PC-3 (cell line): ENCODE measurements at regions of chr2 and their contacts with region 1.

Region 1: DNA sequence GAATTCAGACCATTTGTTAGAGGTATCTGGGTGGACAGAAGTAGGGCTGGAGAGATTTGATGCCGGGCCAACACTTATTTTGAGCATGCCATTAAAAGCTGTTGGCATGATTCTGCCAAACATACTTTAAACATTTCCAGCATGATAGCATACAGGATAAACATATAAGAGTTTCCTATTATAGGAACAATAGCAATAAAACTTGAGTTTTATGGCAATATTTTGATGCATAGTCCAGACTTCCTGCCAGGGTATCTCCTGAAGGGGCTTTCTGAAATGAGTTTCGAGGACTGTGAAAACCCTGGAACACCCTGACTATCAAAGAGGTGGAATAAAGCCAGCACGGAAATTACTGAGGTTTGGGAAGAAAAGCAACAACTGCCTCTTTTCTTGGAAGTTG is 1398.0 kb upstream of the NXPH2 start:
- DNase-seq: peak; percentile 88
- ATAC-seq: peak; percentile 87
- H3K4me3 ChIP-seq: peak overlapping the region; percentile 16; the same call in 1 of the 2 replicates
- H3K27ac ChIP-seq: peak overlapping the region; percentile 27; the same call in 1 of the 2 replicates
- H3K4me1 ChIP-seq: peaks cover 17% of the 10 kb centered on the region
- H3K27me3 ChIP-seq: no peaks in the 10 kb centered on the region
- CTCF ChIP-seq: no peak

Region 2: DNA sequence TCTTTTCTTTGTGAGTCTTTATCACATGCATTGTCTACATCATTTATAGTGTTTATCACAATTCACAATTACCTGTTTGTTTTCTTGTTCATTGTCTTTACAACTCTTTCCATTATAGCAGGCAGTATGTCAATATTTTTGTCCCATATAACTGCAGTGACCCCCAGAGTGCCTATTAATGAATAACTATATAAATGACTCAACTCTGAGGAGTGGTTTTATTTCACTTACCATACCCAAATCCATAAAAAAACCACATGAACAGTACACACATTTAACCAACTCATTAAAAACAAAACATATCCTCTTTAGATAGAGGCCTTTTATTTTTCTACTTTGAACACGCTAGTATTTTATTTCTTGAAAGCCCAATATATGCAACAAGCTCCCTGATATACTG is 21.1 kb after region 1 on chr2:
- CTCF ChIA-PET with region 1: no interaction called
- POLR2A ChIA-PET with region 1: no interaction called
- intact Hi-C with region 1: loop called (anchors 1 kb)
- DNase-seq: peak; percentile 63
- ATAC-seq: peak; percentile 96
- H3K4me3 ChIP-seq: no peak overlapping the region
- H3K27ac ChIP-seq: peak overlapping the region; percentile 38; the same call in 1 of the 2 replicates
- H3K4me1 ChIP-seq: peaks cover 8% of the 10 kb centered on the region; the same call in 1 of the 2 replicates
- H3K27me3 ChIP-seq: no peaks in the 10 kb centered on the region
- CTCF ChIP-seq: no peak

Region 3: DNA sequence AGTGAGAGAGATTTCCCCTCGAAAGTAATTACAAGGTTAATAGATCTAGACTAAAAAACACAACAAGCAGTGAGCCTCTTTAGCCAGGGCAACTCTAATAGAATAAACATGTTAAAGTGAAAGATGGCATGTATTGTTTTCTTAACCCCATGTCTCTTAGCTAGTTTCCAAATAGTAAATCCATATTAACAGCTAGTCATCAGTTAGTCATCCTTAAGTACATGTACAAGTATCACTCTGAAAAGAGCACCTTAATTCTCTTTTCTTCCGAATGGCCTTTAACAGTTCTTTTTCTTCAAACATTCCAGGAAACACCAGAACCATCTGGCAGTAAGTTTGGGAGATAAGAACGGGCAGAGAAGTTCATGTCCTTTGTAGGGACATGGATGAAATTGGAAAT is 472.6 kb after region 1 on chr2:
- CTCF ChIA-PET with region 1: no interaction called
- POLR2A ChIA-PET with region 1: no interaction called
- intact Hi-C with region 1: loop called (anchors 10 kb)
- DNase-seq: peak; percentile 81
- ATAC-seq: peak; percentile 90
- H3K4me3 ChIP-seq: no peak overlapping the region
- H3K27ac ChIP-seq: peak overlapping the region; percentile 76
- H3K4me1 ChIP-seq: peaks cover 28% of the 10 kb centered on the region
- H3K27me3 ChIP-seq: no peaks in the 10 kb centered on the region
- CTCF ChIP-seq: no peak